ENCODE measurements at regions of chr4 and their contacts with region 1.

Region 1: DNA sequence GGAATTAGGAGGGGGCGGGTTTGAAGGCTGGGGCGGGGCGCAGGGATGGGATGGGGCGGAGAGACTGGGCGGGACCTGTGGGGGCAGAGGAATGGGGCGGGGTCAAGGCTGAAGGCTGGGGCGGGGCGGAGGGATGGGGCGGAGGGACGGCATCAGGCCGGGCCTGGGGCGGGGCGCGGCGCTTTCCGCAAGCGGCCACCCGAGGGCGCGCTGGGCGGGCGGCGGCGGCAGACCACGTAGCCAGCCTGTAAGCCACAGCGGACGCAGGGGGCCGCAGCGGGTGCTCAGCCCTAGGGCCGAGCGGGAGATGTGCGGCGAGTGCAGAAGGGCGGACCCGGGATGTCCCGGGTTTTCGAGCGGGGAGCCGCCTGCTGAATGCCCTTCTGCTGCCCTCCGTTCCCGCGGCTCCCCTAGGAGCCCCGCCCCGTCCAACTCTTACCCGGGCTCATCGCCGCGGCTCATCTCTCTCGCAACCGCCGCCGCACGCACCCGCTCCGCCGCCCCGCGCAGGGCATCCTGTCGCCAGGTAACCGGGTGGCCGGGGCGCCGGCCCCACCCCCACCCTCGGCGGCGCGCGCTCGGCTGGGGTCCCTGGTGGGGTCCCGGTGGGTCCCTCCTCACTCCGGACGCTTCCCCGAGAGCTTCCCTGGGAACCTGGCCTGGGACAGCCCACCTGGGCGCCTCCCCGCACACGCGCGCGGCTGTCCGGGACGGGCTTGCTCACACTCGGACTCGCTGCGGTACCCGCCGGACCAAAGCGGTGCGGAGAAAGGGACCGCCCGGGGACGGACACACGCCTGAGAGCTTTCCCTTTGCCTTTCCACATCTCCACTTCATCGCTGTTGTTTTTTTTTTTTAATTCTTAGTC is at the start of gene CCDC110:
- DNase-seq: peak; percentile 92 to 94
- ATAC-seq: peak; percentile 84 to 88
- H3K4me3 ChIP-seq: peak within 1 kb of the TSS; percentile 74 to 94 (median 83)
- H3K27ac ChIP-seq: peak within 1 kb of the TSS; percentile 79 to 83 (median 80)
- H3K4me1 ChIP-seq: peaks cover 0 to 4% of the 10 kb centered on the region in 2 donors
- H3K27me3 ChIP-seq: no peaks in the 10 kb centered on the region
- CTCF ChIP-seq: peak; percentile 63 to 90 (median 75)
- POLR2A ChIP-seq: peak; percentile 67 to 75
- total RNA-seq, gene CCDC110: 0.97 to 4.1 (median 1.8) TPM

Region 2: DNA sequence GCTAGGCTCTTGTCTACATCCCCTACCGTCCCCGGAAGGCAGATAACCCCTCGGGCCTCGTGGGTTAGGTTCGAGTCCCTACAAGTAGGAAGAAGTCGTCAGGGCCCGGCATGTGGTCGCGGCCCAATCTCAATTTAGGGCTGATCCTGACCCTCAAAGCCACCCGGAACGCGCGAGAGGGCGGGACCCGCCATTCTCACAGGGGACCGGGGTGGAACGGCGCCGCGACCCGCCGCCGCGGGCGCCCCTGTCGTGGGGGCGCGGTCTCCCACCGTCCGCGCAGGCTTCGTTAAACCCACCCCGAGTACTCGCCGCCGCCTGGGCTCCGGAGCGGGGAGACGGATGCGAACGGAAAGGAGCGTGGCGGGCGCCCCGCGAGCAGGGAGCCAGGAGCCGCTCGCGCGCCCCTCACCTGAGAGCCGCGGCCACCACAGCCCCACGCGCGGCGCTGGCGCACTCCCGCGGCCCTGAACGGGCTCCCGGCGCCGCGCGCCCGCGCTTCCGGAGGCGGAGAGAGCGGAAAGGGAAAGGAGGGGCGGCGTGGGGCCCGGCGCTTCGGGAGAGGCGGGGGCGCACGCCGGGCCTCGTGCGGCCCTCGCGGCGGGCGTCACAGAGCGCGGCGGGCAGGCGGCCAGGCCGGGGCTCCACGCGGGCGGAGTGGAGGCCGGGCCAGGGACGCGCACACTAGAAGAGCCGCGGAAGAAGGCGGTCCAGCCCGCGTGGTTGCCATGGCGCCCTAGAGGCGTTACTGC is 267.8 kb before region 1 on chr4 and contains the start of gene CFAP97:
- in situ Hi-C with region 1: no loop called
- intact Hi-C with region 1: loop called (anchors 2 kb)
- DNase-seq: peak; percentile 70 to 79
- ATAC-seq: peak; percentile 87 to 89
- H3K4me3 ChIP-seq: peak within 1 kb of the TSS; percentile 63 to 87 (median 74)
- H3K27ac ChIP-seq: peak within 1 kb of the TSS; percentile 85 to 99 (median 97)
- H3K4me1 ChIP-seq: peaks cover 10 to 25% of the 10 kb centered on the region in 2 donors
- H3K27me3 ChIP-seq: no peaks in the 10 kb centered on the region
- CTCF ChIP-seq: peak in 2 of 5 experiments; percentile 10 to 13
- POLR2A ChIP-seq: peak; percentile 84 to 87
- total RNA-seq, gene CFAP97: 6.5 to 14.1 (median 10.8) TPM

Region 3: DNA sequence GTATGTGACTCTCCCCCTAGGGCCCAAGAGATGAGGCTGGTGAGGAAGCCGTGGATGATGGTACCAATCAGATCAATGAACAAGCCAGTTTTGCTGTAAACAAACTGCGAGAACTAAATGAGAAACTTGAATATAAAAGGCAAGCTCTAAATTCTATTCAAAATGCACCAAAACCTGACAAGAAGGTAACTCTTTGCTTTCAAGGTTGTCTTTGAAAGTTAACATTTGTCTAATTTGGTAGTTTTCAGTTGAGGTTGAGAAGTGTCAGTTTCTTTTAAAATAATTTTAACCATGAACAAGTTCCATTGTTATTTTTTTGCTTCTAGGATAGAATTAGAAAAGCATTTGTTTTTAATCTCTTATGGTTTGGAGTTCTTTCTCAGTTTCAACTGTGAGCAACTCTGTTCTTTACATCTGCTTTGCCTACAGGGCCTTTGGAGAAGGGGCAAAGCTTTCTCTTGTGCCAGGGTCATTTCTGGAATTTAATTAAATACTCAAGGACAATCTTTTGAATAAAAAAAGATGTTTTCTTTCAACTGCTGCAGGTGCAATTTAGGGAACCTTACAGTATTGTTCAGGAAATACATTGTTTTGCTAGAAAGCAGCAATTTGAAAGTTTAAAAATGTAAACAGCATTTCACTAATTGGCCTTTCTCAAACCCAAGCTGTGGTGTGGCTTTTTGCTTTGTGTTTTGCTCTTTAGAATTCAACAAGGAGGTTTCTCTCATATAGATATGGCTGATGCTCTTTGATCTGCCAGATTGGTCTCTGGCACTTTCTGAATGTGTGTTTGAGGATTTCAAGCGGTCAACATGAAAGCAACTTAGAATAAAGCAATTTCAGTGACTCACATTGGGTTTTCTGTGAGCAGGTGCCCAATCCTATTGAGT is 138.6 kb before region 1 on chr4:
- in situ Hi-C with region 1: no loop called
- intact Hi-C with region 1: no loop called
- DNase-seq: no peak
- ATAC-seq: no peak
- H3K4me3 ChIP-seq: no peak overlapping the region
- H3K27ac ChIP-seq: no peak overlapping the region
- H3K4me1 ChIP-seq: no peaks in the 10 kb centered on the region
- H3K27me3 ChIP-seq: no peaks in the 10 kb centered on the region
- CTCF ChIP-seq: no peak
- POLR2A ChIP-seq: no peak

Region 4: DNA sequence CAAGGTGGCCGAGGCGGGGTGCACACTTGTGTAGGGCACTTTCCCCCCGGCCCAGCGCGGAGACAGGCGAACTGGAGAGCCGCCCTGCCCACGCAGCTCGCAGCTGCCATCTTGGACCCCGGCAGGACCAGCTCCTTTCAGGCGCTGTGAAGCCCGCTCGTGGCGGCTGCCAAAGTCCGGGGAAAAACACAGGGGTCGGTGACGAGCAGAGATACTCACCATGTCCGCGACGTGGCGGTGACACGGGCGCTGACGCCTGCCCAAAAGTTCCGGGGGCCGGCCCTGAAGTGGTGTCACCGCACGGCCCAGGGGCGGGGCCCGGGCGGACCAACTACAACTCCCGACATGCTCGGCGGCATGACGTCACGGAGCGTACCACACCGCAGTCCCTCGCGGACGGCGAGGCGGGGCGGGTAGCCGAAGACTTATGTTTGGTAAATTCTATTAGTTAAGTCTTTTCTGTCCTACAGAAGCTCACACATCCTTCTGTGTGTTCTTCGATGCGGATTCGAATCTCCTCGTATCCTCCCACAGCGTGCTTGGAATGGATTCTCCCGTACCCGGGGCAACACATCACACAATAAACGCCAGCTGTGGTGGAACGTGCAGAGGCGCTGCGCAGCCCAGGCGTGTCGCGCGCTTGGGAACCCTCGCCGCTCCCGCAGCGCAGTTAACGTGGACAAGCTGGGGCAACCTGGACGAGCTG is 45.7 kb before region 1 on chr4 and contains the start of gene UFSP2:
- in situ Hi-C with region 1: no loop called
- intact Hi-C with region 1: loop called (anchors 1 kb)
- DNase-seq: peak; percentile 72 to 84
- ATAC-seq: peak; percentile 95 to 96
- H3K4me3 ChIP-seq: peak within 1 kb of the TSS; percentile 65 to 95 (median 85)
- H3K27ac ChIP-seq: peak within 1 kb of the TSS; percentile 89 to 99 (median 94)
- H3K4me1 ChIP-seq: peaks cover 18 to 28% of the 10 kb centered on the region in 2 donors
- H3K27me3 ChIP-seq: no peaks in the 10 kb centered on the region
- CTCF ChIP-seq: peak in 1 of 5 experiments; percentile 16
- POLR2A ChIP-seq: peak; percentile 80 to 85
- total RNA-seq, gene UFSP2: 36.3 to 56.5 (median 40.1) TPM

Region 5: GRCh38 chr4:185488650-185489049 is 17.2 kb after region 1 on chr4:
- in situ Hi-C with region 1: no loop called
- intact Hi-C with region 1: no loop called
- DNase-seq: no peak
- ATAC-seq: no peak
- H3K4me3 ChIP-seq: no peak overlapping the region
- H3K27ac ChIP-seq: no peak overlapping the region
- H3K4me1 ChIP-seq: no peaks in the 10 kb centered on the region
- H3K27me3 ChIP-seq: no peaks in the 10 kb centered on the region
- CTCF ChIP-seq: no peak
- POLR2A ChIP-seq: no peak

Region 6: GRCh38 chr4:185587427-185588161 is 116.1 kb after region 1 on chr4:
- in situ Hi-C with region 1: loop called in 3 of 4 experiments (anchors 5 to 10 kb)
- intact Hi-C with region 1: no loop called
- DNase-seq: peak in 1 of 2 donors; percentile 55
- ATAC-seq: peak; percentile 18 to 37
- H3K4me3 ChIP-seq: peak overlapping the region in 3 of 4 donors; percentile 5 to 45 (median 26)
- H3K27ac ChIP-seq: peak overlapping the region; percentile 64 to 88 (median 76)
- H3K4me1 ChIP-seq: peaks cover 29 to 31% of the 10 kb centered on the region in 2 donors
- H3K27me3 ChIP-seq: no peaks in the 10 kb centered on the region
- CTCF ChIP-seq: no peak
- POLR2A ChIP-seq: peak in 1 of 2 donors; percentile 38

Region 7: DNA sequence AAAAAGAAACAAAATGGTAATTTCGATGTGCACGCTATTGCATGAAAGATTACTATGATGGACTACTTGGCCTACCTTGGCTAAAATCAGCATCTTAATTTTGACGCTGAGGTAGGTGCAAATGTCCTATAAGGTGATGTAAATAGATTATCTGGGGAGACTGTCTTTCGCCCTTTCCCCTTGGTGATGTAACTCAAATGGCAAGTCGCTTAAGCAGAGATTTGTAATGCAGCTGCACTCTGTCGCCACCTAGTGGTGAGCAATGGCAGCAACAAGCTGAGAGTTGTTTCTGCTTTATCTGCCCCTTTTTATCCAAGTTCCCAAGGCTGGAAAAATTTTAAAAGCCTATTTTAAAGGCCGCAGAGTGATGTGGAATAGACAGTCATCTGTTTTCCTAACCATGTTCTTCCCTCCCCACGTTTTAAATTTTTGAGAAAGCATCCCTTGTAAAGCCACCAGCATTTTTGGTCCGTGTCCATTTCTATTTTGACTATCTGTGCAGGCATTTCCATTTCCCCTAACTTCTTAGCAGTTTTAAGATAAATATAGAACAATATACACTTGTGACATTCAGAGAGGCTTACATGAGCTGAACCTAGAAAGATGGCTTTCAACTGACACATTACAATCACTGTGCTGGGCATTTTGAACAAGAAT is 126.2 kb after region 1 on chr4:
- in situ Hi-C with region 1: loop called in 3 of 4 experiments (anchors 5 to 10 kb)
- intact Hi-C with region 1: loop called (anchors 1 kb)
- DNase-seq: peak; percentile 52 to 69
- ATAC-seq: peak; percentile 74 to 86
- H3K4me3 ChIP-seq: no peak overlapping the region
- H3K27ac ChIP-seq: peak overlapping the region in 3 of 4 donors; percentile 47 to 59 (median 49)
- H3K4me1 ChIP-seq: peaks cover 4 to 11% of the 10 kb centered on the region in 2 donors
- H3K27me3 ChIP-seq: no peaks in the 10 kb centered on the region
- CTCF ChIP-seq: peak; percentile 95 to 100 (median 98)
- POLR2A ChIP-seq: no peak

Region 8: GRCh38 chr4:186037692-186038658 is 566.5 kb after region 1 on chr4:
- in situ Hi-C with region 1: loop called in 2 of 4 experiments (anchors 25 kb)
- intact Hi-C with region 1: no loop called
- DNase-seq: no peak
- ATAC-seq: peak; percentile 72
- H3K4me3 ChIP-seq: no peak overlapping the region
- H3K27ac ChIP-seq: no peak overlapping the region
- H3K4me1 ChIP-seq: no peaks in the 10 kb centered on the region
- H3K27me3 ChIP-seq: no peaks in the 10 kb centered on the region
- CTCF ChIP-seq: peak; percentile 59 to 79 (median 76)
- POLR2A ChIP-seq: no peak

Measured in gastrocnemius medialis (tissue), 4 donors.